Activated T-helper 2 cell treated with anti-CD3 and anti-CD28 coated beads, Interferon-gamma antibody, Interleukin-2, Interleukin-4, amounts not matched to agents 10 μg/mL and 5 μg/mL and 100 μg/mL, durations not matched to agents 14 hours and 24 hours and 36 hours (primary cell): ENCODE measurements at regions of chr19 and their contacts with region 1.

Region 1: DNA sequence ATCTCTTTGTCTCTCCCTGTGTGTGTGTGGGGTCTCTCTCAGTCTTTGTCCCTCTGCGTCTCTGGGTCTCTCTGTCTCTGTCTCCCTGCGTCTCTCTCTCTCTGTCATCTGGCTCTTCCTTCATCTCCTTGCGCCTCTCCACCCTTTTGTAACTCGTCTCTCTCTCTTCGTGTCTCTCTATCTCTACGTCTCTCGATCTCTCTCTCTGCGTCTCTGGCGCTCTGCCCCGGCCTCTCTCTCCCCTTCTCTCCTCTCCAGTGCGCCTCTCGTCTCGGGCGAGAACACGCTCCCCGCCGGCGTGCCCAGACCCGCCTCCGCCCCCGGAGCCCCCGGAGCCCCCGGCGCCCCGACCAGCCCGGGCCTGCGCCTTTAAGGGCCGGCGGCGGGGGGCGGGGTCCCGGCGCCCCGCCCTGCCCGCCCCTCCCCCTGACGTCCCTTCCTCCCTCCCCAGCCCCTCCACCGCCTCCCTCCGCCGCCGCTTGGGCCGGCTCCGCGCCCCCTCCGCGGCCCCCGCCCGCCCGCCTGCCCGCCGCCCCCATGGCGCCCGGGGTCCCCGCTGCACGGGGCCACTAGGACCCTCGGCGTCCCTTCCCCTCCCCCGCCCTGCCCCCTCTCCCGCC is at the start of gene MARK4:
- DNase-seq: peak; percentile 46
- H3K4me3 Mint-ChIP-seq: peak within 1 kb of the TSS; percentile 85
- H3K27ac Mint-ChIP-seq: peak within 1 kb of the TSS; percentile 65
- H3K4me1 Mint-ChIP-seq: peaks cover 19% of the 10 kb centered on the region
- H3K27me3 Mint-ChIP-seq: peaks cover 2% of the 10 kb centered on the region
- total RNA-seq, gene MARK4: 25.6 and 28.9 TPM in 2 replicates

Region 2: GRCh38 chr19:45215383-45216191 is 35.4 kb before region 1 on chr19:
- intact Hi-C with region 1: no loop called
- DNase-seq: no peak
- H3K4me3 Mint-ChIP-seq: no peak overlapping the region
- H3K27ac Mint-ChIP-seq: no peak overlapping the region
- H3K4me1 Mint-ChIP-seq: peaks cover 2% of the 10 kb centered on the region
- H3K27me3 Mint-ChIP-seq: peaks cover 56% of the 10 kb centered on the region

Region 3: DNA sequence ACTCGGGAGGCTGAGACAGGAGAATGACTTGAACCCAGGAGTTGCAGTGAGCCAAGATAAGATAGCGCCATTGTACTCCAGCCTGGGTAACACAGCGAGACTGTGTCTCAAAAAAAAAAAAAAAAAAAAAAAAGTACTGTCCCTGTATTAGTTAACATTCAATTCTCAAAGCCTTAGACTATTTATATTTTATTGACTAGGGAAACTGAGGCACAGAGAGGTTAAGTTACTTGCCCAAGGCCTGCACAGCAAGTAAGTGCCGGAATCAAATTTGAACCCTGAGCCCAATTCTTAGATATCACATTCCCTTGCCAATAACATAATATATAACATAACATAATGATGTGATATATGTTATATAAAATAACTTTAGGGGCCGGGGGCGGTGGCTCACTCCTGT is 88.7 kb after region 1 on chr19:
- intact Hi-C with region 1: loop called (anchors 2 kb)
- DNase-seq: no peak
- H3K4me3 Mint-ChIP-seq: no peak overlapping the region
- H3K27ac Mint-ChIP-seq: no peak overlapping the region
- H3K4me1 Mint-ChIP-seq: no peaks in the 10 kb centered on the region
- H3K27me3 Mint-ChIP-seq: peaks cover 5% of the 10 kb centered on the region